ENCODE measurements at regions of chr3 and their contacts with region 1.

Region 1: GRCh38 chr3:51371943-51372557 is 13.0 kb upstream of the MANF start:
- DNase-seq: peak; percentile 52
- H3K4me3 ChIP-seq: no peak overlapping the region
- H3K27ac ChIP-seq: no peak overlapping the region
- H3K4me1 ChIP-seq: no peaks in the 10 kb centered on the region
- H3K27me3 ChIP-seq: no peaks in the 10 kb centered on the region
- CTCF ChIP-seq: peak; percentile 70 to 82

Region 2: GRCh38 chr3:50850639-50851511 is 521.2 kb before region 1 on chr3:
- CTCF ChIA-PET with region 1: no interaction called
- dilution Hi-C with region 1: no loop called
- in situ Hi-C with region 1: no loop called
- intact Hi-C with region 1: loop called (anchors 10 kb)
- DNase-seq: peak; percentile 36
- H3K4me3 ChIP-seq: no peak overlapping the region
- H3K27ac ChIP-seq: no peak overlapping the region
- H3K4me1 ChIP-seq: peaks cover 17% of the 10 kb centered on the region
- H3K27me3 ChIP-seq: no peaks in the 10 kb centered on the region
- CTCF ChIP-seq: peak in 1 of 2 donors; percentile 31

Region 3: GRCh38 chr3:50971487-50971924 is 400.5 kb before region 1 on chr3:
- CTCF ChIA-PET with region 1: interaction called, 3 read pairs
- dilution Hi-C with region 1: no loop called
- in situ Hi-C with region 1: loop called in 1 of 2 experiments (anchors 25 kb)
- intact Hi-C with region 1: loop called (anchors 1 kb)
- DNase-seq: peak; percentile 53
- H3K4me3 ChIP-seq: no peak overlapping the region
- H3K27ac ChIP-seq: no peak overlapping the region
- H3K4me1 ChIP-seq: no peaks in the 10 kb centered on the region
- H3K27me3 ChIP-seq: no peaks in the 10 kb centered on the region
- CTCF ChIP-seq: peak; percentile 88 to 91

Region 4: GRCh38 chr3:51099794-51100535 is 272.1 kb before region 1 on chr3:
- CTCF ChIA-PET with region 1: interaction called, 6 read pairs
- dilution Hi-C with region 1: loop called (anchors 10 kb)
- in situ Hi-C with region 1: loop called (anchors 5 to 10 kb)
- intact Hi-C with region 1: loop called (anchors 1 kb)
- DNase-seq: peak; percentile 46
- H3K4me3 ChIP-seq: no peak overlapping the region
- H3K27ac ChIP-seq: no peak overlapping the region
- H3K4me1 ChIP-seq: no peaks in the 10 kb centered on the region
- H3K27me3 ChIP-seq: no peaks in the 10 kb centered on the region
- CTCF ChIP-seq: peak; percentile 75 to 84

Region 5: DNA sequence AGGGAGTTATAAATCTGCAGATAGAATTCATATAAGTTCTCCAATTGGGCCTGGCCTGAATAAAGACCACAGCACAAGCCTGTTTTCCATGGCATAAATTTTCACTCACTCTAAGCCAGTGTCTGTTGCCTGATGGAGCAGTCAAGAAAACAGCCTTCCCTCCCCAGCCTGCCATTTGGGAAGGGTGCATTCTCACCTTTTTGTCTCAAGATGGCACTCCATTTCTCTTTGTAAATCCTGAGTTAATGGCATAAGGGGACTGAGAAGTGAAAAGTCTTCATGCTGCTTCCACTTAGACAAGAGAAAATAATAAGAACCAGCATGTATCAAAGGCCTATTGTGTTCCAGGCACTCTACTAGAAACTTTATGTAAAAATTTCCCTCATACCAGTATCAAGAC is 102.6 kb before region 1 on chr3:
- CTCF ChIA-PET with region 1: no interaction called
- dilution Hi-C with region 1: no loop called
- in situ Hi-C with region 1: loop called in 1 of 2 experiments (anchors 10 kb)
- intact Hi-C with region 1: loop called (anchors 1 kb)
- DNase-seq: peak; percentile 31
- H3K4me3 ChIP-seq: no peak overlapping the region
- H3K27ac ChIP-seq: no peak overlapping the region
- H3K4me1 ChIP-seq: no peaks in the 10 kb centered on the region
- H3K27me3 ChIP-seq: no peaks in the 10 kb centered on the region
- CTCF ChIP-seq: peak; percentile 33 to 66

Region 6: DNA sequence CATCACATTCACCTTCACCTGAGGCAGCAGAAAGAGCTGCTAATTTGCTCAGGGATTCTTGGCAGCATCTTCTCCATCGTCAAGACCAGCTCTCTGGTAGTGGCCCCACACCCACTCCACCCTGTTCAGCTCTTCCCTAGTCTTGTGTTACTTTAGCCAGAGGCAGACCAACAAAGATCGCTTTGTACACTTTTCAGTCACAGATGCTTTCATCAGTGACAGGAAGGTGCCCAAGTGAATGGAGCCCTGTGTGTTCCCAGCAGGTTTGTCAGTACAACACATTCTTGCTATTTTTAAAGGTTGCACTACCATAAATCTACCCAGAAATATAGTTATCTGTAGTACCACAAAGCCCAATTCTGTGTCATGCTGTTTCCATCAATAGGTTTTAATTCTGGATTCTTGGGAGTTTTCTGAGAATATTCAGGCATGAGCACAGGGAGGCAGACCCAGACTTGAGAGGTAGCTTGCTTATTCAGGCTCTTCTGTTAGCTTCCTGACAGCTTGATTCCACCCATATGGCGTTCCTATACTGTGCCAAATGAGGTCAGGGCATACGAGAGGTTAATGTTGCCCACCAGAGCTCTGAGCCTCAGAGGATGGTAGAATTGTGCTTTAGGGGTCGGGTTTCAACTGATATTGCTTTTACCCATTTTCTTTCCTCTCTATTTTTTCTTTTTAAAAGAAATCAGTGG is 96.8 kb before region 1 on chr3:
- CTCF ChIA-PET with region 1: no interaction called
- dilution Hi-C with region 1: no loop called
- in situ Hi-C with region 1: loop called (anchors 5 to 10 kb)
- intact Hi-C with region 1: no loop called
- DNase-seq: no peak
- H3K4me3 ChIP-seq: no peak overlapping the region
- H3K27ac ChIP-seq: no peak overlapping the region
- H3K4me1 ChIP-seq: no peaks in the 10 kb centered on the region
- H3K27me3 ChIP-seq: no peaks in the 10 kb centered on the region
- CTCF ChIP-seq: no peak

Region 7: DNA sequence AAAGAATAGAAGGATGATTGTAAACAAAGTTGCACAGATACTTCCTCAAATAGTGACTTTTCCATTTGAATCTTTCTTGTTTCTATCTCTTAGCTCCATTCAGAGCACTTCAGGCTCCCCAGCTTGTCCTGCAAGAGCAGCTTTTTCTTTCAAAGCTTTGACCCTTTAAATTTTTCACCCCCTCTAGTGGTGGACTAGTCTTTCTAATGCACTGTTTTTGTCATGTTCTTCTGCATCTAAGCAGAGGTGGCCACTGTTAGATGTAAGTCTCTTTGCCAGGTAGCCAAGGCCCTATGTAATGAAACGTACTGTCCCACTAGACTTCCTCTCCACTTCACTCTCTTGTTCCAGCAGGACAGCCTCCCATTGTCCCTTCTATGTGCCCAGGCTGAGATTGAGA is 61.0 kb before region 1 on chr3:
- CTCF ChIA-PET with region 1: no interaction called
- dilution Hi-C with region 1: no loop called
- in situ Hi-C with region 1: no loop called
- intact Hi-C with region 1: loop called (anchors 2 kb)
- DNase-seq: peak; percentile 18
- H3K4me3 ChIP-seq: no peak overlapping the region
- H3K27ac ChIP-seq: no peak overlapping the region
- H3K4me1 ChIP-seq: no peaks in the 10 kb centered on the region
- H3K27me3 ChIP-seq: no peaks in the 10 kb centered on the region
- CTCF ChIP-seq: peak; percentile 35 to 50

Region 8: GRCh38 chr3:51401735-51402134 is 29.7 kb after region 1 on chr3:
- CTCF ChIA-PET with region 1: no interaction called
- dilution Hi-C with region 1: no loop called
- in situ Hi-C with region 1: no loop called
- intact Hi-C with region 1: no loop called
- DNase-seq: no peak
- H3K4me3 ChIP-seq: no peak overlapping the region
- H3K27ac ChIP-seq: no peak overlapping the region
- H3K4me1 ChIP-seq: no peaks in the 10 kb centered on the region
- H3K27me3 ChIP-seq: no peaks in the 10 kb centered on the region
- CTCF ChIP-seq: no peak